AG04450 (cell line): ENCODE measurements at regions of chr3 and their contacts with region 1.

Region 1: DNA sequence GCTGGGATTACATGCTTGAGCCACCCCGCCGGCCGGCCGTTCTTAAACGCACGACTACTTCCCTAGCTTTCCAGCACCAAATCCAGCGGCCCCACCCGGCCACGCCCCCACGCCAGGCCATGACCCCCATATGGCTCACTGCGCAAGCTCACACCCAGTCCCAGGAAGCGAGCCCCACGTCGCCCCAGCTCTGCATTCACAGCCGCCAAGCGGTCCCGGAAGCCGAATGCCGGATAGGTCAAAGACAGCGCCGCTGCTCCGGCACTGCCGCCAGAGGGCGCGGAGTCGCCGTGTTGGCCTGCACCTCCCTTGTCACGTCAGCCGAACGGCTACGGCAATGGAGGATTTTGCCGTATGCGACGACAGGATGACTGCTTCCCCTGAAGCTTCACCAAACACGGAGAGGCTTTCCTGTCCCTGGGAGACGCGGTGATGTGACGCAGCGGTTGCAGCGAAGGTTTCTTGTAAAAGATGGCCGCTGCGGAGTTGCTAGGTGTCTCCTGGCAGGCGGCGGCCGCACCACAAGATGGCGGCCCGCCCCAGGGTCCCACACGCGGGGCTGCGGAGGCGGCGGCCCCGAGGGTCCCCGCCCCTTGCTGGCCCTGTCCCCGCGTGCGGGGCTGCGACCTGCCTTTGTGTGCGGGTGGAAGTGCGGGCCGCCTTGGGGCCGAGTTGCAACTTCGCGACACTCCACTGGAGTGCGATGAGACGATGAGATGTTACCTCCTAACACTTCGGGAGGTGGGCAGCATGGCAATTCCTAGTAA is 30.2 kb upstream of the RPN1 start:
- DNase-seq: peak; percentile 95
- H3K4me3 ChIP-seq: peak overlapping the region; percentile 69
- H3K27ac ChIP-seq: peak overlapping the region; percentile 88
- H3K27me3 ChIP-seq: no peaks in the 10 kb centered on the region
- CTCF ChIP-seq: peak; percentile 95

Region 2: DNA sequence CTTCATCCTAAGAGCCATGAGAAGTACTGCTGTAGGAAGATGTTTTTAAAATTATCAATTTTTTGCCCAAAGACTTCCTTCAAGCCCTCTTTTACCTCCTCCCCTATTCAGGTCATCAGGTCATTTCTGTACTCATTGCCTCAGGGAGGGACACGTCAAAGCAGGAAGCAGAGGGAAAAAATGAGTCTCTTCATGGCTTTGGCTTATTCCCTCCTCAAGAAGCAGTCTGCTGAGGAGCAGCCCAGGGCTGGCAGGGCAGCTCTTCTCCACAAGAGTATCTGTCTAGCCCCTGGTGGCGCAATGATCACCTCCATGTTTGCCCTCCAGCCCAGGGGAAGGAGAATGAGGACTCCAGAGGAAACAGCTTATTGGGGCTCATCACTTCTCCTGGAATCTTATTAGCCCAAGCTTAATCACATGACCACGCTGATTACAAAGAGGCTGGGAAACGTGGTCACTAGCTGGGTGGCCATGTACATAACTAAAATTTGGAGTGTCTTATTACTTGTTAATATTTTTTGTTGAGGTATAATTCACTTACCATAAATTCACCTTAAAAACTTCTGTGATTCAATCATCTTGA is 143.6 kb before region 1 on chr3:
- CTCF ChIA-PET with region 1: no interaction called
- POLR2A ChIA-PET with region 1: no interaction called
- DNase-seq: no peak
- H3K4me3 ChIP-seq: no peak overlapping the region
- H3K27ac ChIP-seq: no peak overlapping the region
- H3K27me3 ChIP-seq: peaks cover 48% of the 10 kb centered on the region
- CTCF ChIP-seq: no peak

Region 3: DNA sequence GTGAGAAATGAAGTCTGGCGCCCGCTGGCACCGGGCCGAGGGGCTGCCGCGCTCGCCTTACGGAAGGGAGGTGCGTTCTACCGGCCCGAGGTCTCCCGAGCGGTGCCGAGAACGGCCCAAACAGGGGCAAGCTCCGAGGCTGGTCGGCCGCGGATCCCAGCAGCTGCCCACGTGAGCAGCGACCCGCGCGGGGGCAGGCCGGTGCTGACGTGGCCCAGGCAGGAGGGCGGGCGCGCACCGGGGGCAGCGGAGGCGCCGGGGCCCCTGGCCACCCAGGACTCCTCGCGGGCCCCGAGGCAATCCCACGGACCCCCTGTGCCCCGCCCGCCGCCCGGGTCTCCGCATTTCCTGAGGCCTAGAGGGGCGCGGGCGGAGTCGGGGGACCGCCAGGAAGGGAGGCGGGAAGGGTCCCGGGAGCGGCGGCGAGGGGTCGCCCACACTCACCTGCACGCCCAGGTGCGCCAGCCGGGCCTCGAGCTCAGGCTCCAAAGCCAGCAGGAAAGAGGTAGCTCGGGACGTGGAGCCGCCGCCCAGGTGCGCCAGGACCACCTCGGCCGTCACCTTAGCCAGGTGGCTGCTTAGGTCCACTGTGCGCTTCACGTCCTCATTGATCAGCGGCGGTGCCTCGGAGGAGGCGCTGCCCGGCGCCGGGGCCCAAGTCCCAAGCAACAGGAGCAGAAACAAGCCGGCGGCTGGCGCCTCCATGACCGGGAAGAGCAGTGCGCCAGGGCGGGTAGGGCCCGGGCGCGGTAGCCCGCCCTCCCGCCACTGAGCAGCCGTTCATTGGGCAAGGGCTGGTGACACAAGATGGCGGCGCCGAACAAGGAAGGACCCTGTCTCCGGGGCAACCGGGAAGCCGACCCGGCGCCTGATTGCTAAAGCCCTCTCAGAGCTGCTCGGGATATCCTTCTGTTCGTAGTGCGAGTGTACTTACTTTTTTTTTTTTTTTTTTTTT is 30.4 kb before region 1 on chr3 and contains the start of gene RPN1:
- CTCF ChIA-PET with region 1: interaction called, 13 read pairs
- POLR2A ChIA-PET with region 1: interaction called, 12 read pairs
- DNase-seq: peak; percentile 89
- H3K4me3 ChIP-seq: peak within 1 kb of the TSS; percentile 100
- H3K27ac ChIP-seq: peak within 1 kb of the TSS; percentile 91
- H3K27me3 ChIP-seq: no peaks in the 10 kb centered on the region
- CTCF ChIP-seq: no peak
- polyA plus RNA-seq, gene RPN1: 403 and 458 TPM in 2 replicates

Region 4: GRCh38 chr3:128725932-128726690 is 45.3 kb after region 1 on chr3 and contains the start of gene RAB7A:
- CTCF ChIA-PET with region 1: interaction called, 14 read pairs
- POLR2A ChIA-PET with region 1: interaction called, 17 read pairs
- DNase-seq: peak; percentile 97
- H3K4me3 ChIP-seq: peak within 1 kb of the TSS; percentile 95
- H3K27ac ChIP-seq: peak within 1 kb of the TSS; percentile 87
- H3K27me3 ChIP-seq: peaks cover 7% of the 10 kb centered on the region
- CTCF ChIP-seq: no peak
- polyA plus RNA-seq, gene RAB7A: 261 and 266 TPM in 2 replicates

Region 5: DNA sequence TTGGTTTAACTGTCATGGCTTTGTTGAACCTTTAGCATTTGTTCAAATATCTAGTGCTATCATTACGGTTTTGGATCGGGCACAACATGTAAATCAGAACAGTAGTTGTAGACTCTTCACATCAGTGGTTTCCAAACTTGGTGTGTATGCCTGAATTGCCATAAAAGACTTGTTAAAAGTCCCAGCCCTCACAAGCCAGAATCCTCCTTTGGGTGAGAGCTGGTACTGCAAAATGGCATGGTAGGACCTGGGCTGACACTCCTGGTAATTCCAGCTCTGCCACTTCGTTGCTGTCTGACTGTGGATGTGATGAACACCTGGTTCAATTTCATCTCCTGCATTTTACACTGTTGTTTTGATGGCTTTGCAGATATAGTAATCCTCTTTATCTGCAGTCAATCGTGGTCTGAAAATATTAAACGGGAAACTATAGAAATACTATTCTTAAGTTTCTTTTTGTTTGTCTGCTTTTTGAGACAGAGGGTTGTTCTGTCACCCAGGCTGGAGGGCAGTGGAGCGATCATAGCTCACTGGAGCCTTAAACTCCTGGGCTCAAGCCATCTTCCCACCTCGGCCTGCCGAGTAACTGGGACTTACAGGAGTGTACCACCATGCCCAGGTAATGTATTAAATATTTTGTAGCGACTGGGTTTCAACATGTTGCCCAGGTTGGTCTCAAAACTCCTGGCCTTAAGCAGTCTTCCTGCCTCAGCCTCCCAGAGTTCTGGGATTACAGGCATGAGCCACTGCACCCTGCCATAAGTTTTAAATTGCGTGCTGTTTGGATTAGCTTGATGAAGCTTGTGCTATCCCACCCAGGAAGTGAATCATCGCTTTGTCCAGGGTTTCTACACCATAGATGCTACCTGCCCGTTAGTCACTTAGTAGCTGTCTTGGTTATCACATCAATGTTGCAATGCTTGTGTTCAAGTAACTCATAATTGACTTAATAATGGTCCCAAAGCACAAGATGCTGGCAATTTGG is 106.8 kb after region 1 on chr3:
- CTCF ChIA-PET with region 1: interaction called, 13 read pairs
- POLR2A ChIA-PET with region 1: no interaction called
- DNase-seq: no peak
- H3K4me3 ChIP-seq: no peak overlapping the region
- H3K27ac ChIP-seq: no peak overlapping the region
- H3K27me3 ChIP-seq: no peaks in the 10 kb centered on the region
- CTCF ChIP-seq: peak; percentile 37

Region 6: DNA sequence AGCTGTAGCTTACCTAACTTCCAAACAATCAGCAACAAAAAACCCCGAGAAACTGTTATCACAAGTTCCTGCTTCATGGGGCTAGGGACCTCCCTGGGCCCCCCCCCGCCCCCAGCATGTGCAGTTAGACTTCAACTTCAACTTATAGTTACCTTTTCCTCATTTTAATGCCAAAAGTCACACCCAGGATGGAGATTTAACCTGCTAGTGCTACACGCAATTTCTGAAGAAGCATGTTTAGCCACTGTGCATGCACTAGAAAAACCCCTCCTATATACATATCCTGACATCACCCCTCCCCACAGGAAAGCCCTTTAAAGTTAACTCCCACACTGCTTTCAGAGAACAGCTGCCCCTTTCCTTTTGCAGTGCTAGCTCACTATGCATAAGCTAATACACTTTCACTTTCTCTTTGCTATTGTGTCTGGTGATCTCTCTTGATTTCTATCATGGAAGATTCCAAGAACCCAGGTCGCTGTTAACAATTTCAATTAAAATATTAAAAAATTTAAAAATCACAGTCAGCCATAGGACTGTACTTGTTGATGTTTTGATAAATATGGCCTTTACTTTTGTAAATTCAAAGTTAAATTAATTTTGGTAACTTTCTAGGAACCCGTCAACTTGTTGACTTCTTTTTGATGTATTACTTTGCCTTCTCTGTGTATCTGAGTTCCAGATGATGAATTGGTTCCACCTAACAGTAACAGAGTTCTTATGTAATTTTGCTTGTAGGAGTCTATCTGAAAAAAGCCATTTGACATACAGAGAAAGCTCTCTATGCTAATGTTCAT is 123.4 kb after region 1 on chr3:
- CTCF ChIA-PET with region 1: interaction called, 103 read pairs
- POLR2A ChIA-PET with region 1: no interaction called
- DNase-seq: no peak
- H3K4me3 ChIP-seq: no peak overlapping the region
- H3K27ac ChIP-seq: no peak overlapping the region
- H3K27me3 ChIP-seq: no peaks in the 10 kb centered on the region
- CTCF ChIP-seq: no peak

Region 7: GRCh38 chr3:128845778-128846485 is 165.1 kb after region 1 on chr3:
- CTCF ChIA-PET with region 1: interaction called, 32 read pairs
- POLR2A ChIA-PET with region 1: interaction called, 6 read pairs
- DNase-seq: no peak
- H3K4me3 ChIP-seq: peak overlapping the region; percentile 49
- H3K27ac ChIP-seq: no peak overlapping the region
- H3K27me3 ChIP-seq: no peaks in the 10 kb centered on the region
- CTCF ChIP-seq: peak; percentile 68

Region 8: DNA sequence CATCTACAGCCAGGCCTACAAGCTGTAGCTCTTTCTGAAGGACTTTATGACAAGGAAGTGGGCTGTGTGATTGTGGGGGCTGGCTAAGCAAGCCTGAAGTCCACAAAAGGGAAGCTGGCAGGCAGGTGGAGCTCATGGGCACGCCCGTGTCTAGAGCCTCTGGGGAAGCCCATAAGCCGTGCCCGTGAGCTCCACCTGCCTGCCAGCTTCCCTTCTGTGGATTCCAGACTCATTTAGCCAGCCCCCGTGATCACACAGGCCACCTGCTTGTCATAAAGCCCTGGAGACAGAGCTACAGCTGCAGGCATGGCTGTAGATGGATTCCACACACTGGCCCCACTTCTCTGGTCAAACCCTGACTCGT is 335.6 kb after region 1 on chr3:
- CTCF ChIA-PET with region 1: no interaction called
- POLR2A ChIA-PET with region 1: no interaction called
- DNase-seq: no peak
- H3K4me3 ChIP-seq: no peak overlapping the region
- H3K27ac ChIP-seq: no peak overlapping the region
- H3K27me3 ChIP-seq: no peaks in the 10 kb centered on the region
- CTCF ChIP-seq: no peak